ENCODE measurements at regions of chr3 and their contacts with region 1.

Region 1: DNA sequence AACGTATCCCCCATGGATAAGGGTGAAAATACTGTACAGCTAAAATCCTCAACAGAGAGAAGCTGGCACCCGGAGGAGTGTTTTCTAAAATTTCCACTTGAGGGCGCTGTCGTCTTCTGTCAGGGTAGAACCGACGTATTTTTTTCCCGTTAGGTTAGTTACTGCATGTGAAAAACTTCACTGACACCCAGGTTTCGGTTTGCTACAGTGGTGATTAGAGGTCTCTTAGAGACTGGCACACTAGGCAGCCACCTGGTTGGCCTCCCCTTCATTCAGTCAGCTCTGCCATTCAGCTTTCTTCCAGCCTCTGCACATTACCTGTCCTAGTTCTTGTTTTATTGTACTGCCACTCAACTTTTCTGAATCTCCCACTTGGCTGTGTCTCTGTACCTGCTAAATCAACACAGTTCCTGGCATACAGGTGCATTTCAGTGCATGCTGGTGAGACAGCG is 18.4 kb downstream of the CCK start:
- DNase-seq: peak in 1 of 3 donors; percentile 65
- ATAC-seq: peak; percentile 16 to 21
- H3K4me3 ChIP-seq: no peak overlapping the region
- H3K27ac ChIP-seq: no peak overlapping the region
- H3K4me1 ChIP-seq: no peaks in the 10 kb centered on the region
- H3K27me3 ChIP-seq: no peaks in the 10 kb centered on the region

Region 2: DNA sequence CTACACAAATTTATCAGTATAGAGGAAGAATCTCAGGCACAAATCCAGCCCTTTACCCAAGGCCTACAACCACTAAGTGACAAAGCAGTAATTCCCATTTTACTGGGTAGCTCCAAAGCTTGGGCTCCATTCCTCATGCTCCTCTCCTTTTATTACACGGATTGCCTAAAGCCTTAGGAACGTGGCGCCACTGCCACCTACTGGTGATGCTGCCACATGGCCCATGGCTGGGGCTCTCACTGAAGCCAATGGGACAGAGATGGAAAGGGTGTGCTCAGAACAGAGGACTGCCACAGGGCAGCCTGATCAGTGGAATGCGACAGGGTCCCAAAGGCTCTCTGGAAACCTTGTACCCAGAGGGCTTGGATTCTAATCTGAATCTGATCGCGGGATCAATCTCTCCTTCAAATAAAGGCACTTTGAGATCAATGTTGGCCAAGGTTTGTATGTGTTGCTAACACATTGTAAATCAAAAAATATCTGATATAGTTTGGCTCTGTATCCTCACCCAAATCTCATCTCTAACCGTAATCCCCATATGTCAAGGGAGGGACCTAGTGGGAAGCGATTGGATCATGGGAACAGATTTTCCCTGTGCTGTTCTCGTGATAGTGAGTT is 196.3 kb after region 1 on chr3:
- intact Hi-C with region 1: loop called (anchors 5 kb)
- DNase-seq: peak; percentile 77 to 93 (median 92)
- ATAC-seq: peak; percentile 93 to 96
- H3K4me3 ChIP-seq: no peak overlapping the region
- H3K27ac ChIP-seq: no peak overlapping the region
- H3K4me1 ChIP-seq: no peaks in the 10 kb centered on the region
- H3K27me3 ChIP-seq: no peaks in the 10 kb centered on the region

Region 3: DNA sequence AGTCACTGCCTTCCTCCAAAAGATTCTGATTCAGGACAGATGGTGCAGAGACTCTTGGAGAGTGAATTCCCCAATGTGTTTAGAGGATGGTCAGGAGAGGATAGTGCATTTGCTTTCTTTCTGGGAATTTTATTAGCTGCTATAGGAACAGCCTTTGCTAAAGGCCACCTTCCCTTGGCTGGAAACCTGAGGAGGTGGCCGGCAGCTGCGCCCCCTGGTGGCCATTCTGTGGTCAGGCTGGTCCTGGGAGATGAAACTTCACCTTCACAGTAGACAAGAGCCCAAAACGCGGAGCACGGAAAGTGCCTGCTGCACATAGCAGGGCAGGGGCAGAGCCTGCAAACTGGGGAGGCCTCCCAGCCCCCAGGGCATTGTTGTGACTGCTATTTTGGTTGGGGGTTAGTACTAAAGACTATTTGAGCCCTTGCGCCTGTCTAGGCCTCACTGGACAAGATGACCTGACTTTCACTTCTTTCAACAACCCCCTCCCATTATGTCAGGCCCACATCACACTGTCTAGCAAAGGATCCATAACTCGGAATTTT is 299.9 kb after region 1 on chr3:
- intact Hi-C with region 1: loop called in 1 of 4 experiments (anchors 5 kb)
- DNase-seq: peak; percentile 67 to 89 (median 86)
- ATAC-seq: peak; percentile 50 to 63
- H3K4me3 ChIP-seq: no peak overlapping the region
- H3K27ac ChIP-seq: no peak overlapping the region
- H3K4me1 ChIP-seq: peaks cover 5% of the 10 kb centered on the region
- H3K27me3 ChIP-seq: no peaks in the 10 kb centered on the region

Region 4: GRCh38 chr3:42755681-42756578 is 508.3 kb after region 1 on chr3:
- intact Hi-C with region 1: loop called in 1 of 4 experiments (anchors 10 kb)
- DNase-seq: no peak
- ATAC-seq: peak; percentile 37 to 51
- H3K4me3 ChIP-seq: no peak overlapping the region
- H3K27ac ChIP-seq: no peak overlapping the region
- H3K4me1 ChIP-seq: no peaks in the 10 kb centered on the region
- H3K27me3 ChIP-seq: no peaks in the 10 kb centered on the region

Measured in right cardiac atrium (tissue), 5 donors.